ENCODE measurements at regions of chr2 and their contacts with region 1.

Region 1: DNA sequence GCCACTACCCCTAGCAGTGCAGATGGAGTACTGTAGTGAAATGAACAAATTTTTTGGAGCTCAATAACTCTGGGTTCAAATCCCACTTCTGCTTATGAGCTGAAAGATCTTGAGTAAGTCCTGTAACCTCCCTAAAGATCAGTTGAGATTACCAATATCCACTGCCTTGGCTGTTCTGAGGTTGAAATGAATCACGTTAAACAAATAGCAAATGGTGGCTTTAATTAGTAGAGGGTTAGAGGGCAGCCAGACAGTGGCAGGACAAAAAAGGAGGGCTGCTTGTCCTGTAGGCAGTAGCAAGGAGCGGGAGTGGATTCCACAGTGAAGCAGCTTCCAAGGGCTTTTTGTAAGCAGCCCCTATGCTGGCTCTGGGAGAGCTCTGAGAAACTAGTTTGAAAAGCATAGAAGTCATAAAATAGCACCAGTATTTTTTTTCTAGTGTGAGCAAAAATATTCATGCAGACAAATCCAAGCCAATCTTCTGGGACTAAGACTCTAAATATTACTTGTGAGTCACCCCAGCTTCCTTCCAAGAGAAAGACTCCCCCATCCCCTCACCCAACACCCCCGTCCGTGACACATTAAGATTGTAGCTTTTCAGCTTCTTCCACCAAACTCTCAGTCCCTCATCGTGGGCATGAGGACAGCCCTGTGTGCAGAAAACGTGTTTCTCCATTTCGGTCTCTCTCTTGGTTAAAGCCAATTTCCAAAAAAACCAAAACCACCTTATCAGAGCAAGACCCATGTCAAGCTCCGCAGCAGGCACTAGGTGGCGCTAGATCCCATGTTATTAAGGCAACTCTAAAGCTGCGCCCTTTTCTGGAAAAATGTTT is 123.5 kb upstream of the LGALSL start:
- DNase-seq: peak; percentile 84
- ATAC-seq: no peak
- H3K4me3 Mint-ChIP-seq: peak overlapping the region; percentile 41
- H3K27ac Mint-ChIP-seq: peak overlapping the region; percentile 27
- H3K4me1 Mint-ChIP-seq: peaks cover 39% of the 10 kb centered on the region
- H3K27me3 Mint-ChIP-seq: no peaks in the 10 kb centered on the region
- CTCF ChIP-seq: peak; percentile 93

Region 2: GRCh38 chr2:64114063-64114911 is 216.2 kb before region 1 on chr2:
- CTCF ChIA-PET with region 1: interaction called, 6 read pairs
- POLR2A ChIA-PET with region 1: interaction called, 6 read pairs
- intact Hi-C with region 1: loop called (anchors 5 kb)
- DNase-seq: no peak
- ATAC-seq: peak; percentile 78
- H3K4me3 Mint-ChIP-seq: peak overlapping the region; percentile 9
- H3K27ac Mint-ChIP-seq: peak overlapping the region; percentile 91
- H3K4me1 Mint-ChIP-seq: peaks cover 77% of the 10 kb centered on the region
- H3K27me3 Mint-ChIP-seq: no peaks in the 10 kb centered on the region
- CTCF ChIP-seq: no peak

Region 3: GRCh38 chr2:64222351-64222750 is 108.1 kb before region 1 on chr2:
- CTCF ChIA-PET with region 1: interaction called, 15 read pairs
- POLR2A ChIA-PET with region 1: interaction called, 5 read pairs
- intact Hi-C with region 1: no loop called
- DNase-seq: no peak
- ATAC-seq: no peak
- H3K4me3 Mint-ChIP-seq: no peak overlapping the region
- H3K27ac Mint-ChIP-seq: no peak overlapping the region
- H3K4me1 Mint-ChIP-seq: peaks cover 20% of the 10 kb centered on the region
- H3K27me3 Mint-ChIP-seq: no peaks in the 10 kb centered on the region
- CTCF ChIP-seq: no peak

Region 4: DNA sequence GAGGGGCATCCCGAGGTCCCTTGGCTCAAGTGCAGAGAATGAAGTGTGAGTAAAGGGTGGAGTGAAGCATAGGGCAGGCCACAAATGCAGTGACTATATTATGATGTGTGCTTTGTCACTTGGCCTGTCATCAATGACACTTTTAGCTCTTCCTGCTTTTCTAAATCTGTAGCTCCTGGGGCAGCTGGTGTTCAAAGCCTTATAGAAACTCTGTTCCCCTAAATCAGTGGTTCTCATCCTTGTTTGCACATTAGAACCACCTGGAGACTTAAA is 12.1 kb before region 1 on chr2:
- CTCF ChIA-PET with region 1: interaction called, 40 read pairs
- POLR2A ChIA-PET with region 1: interaction called, 3 read pairs
- intact Hi-C with region 1: no loop called
- DNase-seq: no peak
- ATAC-seq: peak; percentile 71
- H3K4me3 Mint-ChIP-seq: no peak overlapping the region
- H3K27ac Mint-ChIP-seq: no peak overlapping the region
- H3K4me1 Mint-ChIP-seq: peaks cover 1% of the 10 kb centered on the region
- H3K27me3 Mint-ChIP-seq: no peaks in the 10 kb centered on the region
- CTCF ChIP-seq: no peak

Region 5: GRCh38 chr2:64488050-64488974 is 157.8 kb after region 1 on chr2:
- CTCF ChIA-PET with region 1: interaction called, 324 read pairs
- POLR2A ChIA-PET with region 1: interaction called, 4 read pairs
- intact Hi-C with region 1: loop called (anchors 2 kb)
- DNase-seq: peak; percentile 86
- ATAC-seq: peak; percentile 95
- H3K4me3 Mint-ChIP-seq: no peak overlapping the region
- H3K27ac Mint-ChIP-seq: no peak overlapping the region
- H3K4me1 Mint-ChIP-seq: peaks cover 8% of the 10 kb centered on the region
- H3K27me3 Mint-ChIP-seq: peaks cover 1% of the 10 kb centered on the region
- CTCF ChIP-seq: peak; percentile 96

Region 6: DNA sequence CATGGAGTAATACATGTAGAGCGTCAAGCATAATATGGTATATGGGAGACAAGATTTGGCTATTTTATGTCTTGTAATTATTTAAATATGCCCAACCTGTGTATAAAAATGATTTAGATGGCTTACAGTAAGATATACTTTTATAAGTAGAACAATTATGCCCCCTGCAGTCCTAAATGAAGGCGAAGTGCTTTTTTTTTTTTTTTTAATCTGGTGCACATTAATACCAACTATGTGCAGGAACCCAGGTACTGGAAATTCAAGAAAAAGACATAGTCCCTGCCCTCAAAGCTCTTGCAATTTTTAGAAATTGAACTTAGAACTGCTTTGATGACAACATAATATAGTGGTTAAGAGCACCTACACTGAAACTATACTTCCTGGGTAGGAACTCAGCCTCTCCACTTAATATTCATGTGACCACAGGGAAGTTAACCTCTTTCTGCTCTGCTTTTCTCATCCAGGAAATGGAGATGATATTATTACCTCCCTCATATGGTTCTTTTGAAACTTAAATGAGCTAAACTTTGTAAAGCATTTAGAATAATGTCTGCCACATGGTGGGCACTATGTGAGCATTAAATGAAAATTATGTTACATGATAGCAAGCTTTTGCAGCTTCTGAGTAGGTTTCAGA is 231.8 kb after region 1 on chr2:
- CTCF ChIA-PET with region 1: interaction called, 19 read pairs
- POLR2A ChIA-PET with region 1: no interaction called
- intact Hi-C with region 1: loop called (anchors 10 kb)
- DNase-seq: no peak
- ATAC-seq: peak; percentile 66
- H3K4me3 Mint-ChIP-seq: no peak overlapping the region
- H3K27ac Mint-ChIP-seq: peak overlapping the region; percentile 30
- H3K4me1 Mint-ChIP-seq: peaks cover 41% of the 10 kb centered on the region
- H3K27me3 Mint-ChIP-seq: no peaks in the 10 kb centered on the region
- CTCF ChIP-seq: peak; percentile 70

Measured in activated CD8-positive, alpha-beta T cell treated with anti-CD3 and anti-CD28 coated beads for 36 hours (primary cell).